ENCODE measurements at regions of chr19 and their contacts with region 1.

Region 1: DNA sequence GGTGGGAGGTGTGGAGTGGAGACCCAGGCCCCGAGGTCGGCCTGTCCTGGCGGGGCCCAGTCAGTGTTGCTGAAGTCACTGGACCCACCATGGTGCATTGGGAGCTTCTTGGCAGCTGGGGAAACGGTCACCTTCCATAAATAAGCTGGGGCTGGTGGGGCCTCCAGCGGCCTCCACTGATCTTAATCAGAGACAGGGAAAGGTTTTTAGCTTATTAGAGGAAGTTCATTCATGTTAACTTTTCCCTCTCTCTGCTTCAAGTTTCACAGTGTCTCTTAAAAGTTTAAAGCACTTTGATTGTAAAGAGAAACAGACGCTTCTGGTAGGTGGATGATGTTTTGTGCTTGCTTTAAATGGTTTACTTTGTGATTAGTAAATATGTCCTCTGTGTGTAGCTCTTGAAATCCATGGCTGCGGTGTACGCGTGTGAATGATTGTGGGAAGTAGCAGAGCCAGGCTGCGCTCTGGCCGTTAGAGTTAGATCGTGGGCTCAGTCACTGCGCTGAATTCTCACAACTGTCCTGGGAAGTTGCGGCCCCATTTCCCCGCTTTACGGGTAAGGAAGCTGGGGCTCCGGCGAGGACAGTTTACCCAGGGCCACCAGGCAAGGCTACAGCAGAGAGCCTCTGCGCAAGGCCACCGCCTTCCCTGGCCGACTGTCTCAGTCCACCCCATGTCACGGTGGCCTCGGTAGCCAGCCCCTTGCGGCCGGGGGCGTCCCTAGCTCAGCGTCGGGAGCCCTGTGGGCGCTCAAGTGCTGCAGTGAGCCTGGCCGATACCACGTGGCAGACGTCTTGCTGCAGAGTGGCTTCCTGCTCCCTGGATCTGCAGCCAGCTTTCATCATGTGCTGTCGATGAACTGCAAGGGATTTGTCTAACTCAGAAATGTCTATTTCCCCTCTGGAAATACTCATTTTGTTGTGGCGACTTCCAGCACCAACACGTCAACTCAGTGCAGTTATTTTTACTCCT is 16.5 kb upstream of the NDUFS7 start:
- DNase-seq: no peak
- H3K4me3 ChIP-seq: no peak overlapping the region
- H3K27ac ChIP-seq: no peak overlapping the region
- H3K4me1 ChIP-seq: no peaks in the 10 kb centered on the region
- CTCF ChIP-seq: no peak

Region 2: DNA sequence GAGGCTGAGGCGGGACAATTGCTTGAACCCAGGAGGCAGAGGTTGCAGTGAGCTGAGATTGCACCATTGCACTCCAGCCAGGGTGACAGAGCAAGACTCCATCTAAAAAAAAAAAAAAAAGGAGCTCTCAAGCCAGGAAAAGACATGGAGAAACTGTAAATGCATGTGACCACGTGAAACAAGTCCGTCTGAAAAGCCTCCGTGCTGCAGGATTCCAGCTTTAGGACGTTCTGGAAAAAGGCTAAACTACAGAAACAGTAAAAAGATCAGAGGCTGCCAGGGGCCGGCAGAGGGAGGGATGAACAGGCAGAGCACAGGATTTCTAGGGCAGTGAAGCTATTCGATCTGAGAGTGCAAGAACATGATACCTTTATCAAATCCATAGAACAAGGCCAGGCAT is 24.1 kb before region 1 on chr19:
- CTCF ChIA-PET with region 1: no interaction called
- POLR2A ChIA-PET with region 1: no interaction called
- intact Hi-C with region 1: loop called (anchors 1 kb)
- DNase-seq: no peak
- H3K4me3 ChIP-seq: no peak overlapping the region
- H3K27ac ChIP-seq: no peak overlapping the region
- H3K4me1 ChIP-seq: peaks cover 19% of the 10 kb centered on the region
- CTCF ChIP-seq: no peak

Region 3: DNA sequence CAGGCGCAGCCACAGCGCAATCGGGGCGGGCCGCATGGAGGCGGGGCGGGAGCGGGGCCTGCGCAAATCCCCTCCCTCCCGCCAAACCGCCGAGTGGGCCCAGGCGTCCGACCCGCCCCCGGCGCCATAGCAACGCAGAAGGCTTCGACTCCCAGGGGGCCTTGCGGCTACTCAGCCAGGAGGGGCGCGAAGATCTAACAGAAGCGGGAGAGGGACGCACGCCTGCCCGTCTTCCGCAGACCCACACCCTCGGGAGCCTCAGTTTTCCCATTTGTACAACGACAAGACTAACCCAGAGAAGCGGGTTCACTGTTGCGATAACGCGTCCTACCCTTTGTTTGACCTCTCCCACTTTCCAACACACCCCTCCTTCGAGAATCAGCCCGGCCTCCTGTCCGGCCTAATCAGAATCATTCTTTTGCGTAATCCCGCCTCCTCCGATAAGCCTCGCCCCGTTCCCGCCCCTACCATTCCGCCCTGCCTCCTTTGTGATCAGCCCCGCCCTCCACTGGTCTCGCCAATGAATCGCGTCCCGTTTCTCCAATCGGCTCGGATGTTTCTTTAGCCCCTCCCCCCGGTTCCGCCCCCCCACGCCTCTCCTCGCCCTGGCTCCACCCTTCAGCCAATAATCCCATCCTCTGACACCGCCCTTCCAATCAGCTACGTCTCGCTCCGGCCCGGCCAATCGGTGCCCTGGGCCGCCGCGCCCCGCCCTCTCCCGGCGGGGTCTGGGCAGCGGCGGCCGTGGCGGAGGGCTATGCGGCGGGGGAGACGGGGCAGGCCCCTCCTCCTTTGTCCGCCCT is 123.3 kb after region 1 on chr19 and contains the start of gene PCSK4:
- CTCF ChIA-PET with region 1: no interaction called
- POLR2A ChIA-PET with region 1: no interaction called
- intact Hi-C with region 1: no loop called
- DNase-seq: peak; percentile 98
- H3K4me3 ChIP-seq: peak within 1 kb of the TSS; percentile 68
- H3K27ac ChIP-seq: peak within 1 kb of the TSS; percentile 34
- H3K4me1 ChIP-seq: peaks cover 16% of the 10 kb centered on the region
- CTCF ChIP-seq: no peak
- total RNA-seq, gene PCSK4: 1.9 and 8.3 TPM in 2 replicates

Measured in OCI-LY7 (cell line).